ENCODE measurements at regions of chr1 and their contacts with region 1.

Region 1: DNA sequence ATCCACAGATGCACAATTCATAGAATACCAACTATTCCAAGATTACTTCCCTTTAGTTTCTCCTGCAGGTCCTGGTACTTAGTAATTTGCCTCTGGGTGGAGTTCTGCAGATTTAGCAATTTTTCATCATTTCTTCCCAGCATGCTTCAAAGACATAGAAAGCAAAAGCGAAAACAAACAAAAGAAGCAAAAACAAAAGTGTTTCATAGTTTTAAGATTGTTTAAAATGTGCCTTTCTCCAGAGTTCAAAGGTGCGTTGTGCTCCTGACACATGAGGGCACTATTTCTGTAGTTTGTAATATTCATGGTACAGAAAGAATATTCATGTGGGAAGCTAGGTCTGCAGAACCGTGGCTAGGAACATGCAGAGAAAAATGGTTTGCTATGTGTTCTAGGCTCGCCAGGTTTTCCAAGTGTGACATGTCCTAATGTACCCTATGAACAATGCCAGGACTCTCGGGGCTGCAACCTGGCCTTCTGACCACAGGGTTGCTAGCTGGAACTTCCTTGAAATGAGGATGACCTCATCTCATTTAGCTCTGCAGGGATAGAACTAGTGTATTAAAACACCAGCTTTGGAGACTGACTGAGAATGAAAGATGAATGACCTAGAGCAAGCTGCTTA is 30.0 kb upstream of the RCSD1 start:
- DNase-seq: no peak
- ATAC-seq: peak; percentile 66
- H3K4me3 Mint-ChIP-seq: peak overlapping the region; percentile 48
- H3K27ac Mint-ChIP-seq: peak overlapping the region; percentile 7
- H3K4me1 Mint-ChIP-seq: peaks cover 43% of the 10 kb centered on the region
- H3K27me3 Mint-ChIP-seq: no peaks in the 10 kb centered on the region
- CTCF ChIP-seq: peak; percentile 56

Region 2: DNA sequence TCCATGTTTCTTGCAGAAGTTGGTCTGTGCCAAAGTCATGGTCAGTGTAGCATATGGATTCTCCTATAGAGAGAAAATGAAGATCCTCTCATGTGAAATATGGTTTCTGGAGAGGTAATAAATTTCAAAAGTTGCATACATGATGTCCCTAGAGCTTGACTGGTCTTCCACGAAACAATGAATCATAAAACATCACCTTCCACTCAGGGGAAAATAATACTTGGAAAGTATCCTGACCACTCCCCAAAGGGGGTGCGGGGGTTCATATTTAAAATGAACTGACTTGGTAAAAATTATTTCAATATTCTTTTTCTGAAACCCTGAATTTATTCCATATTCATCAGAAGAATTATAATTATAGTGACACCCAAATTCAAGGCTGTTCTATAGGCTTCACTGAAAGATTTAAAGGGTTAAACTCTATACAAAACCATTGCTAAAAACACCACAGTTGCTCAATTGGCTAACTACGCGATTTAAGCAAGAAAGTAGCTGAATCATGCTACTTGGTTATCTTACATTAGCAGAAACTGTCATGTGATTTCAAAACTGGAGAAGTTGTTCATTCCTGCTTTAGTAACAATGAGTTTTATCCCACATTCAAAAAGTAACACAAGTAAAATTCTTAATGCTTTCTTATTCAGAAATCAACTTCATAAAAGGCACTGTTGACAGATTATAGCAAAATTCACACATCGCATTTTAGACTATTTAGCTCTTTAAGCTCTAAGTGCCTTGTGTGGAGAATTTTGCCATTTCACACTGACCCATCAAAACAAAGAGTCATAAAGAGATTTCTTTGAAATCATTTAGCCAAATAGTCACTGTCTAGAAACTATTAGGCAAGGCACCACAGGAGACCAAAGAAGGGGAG is 51.8 kb before region 1 on chr1:
- CTCF ChIA-PET with region 1: no interaction called
- POLR2A ChIA-PET with region 1: no interaction called
- intact Hi-C with region 1: no loop called
- DNase-seq: no peak
- ATAC-seq: no peak
- H3K4me3 Mint-ChIP-seq: no peak overlapping the region
- H3K27ac Mint-ChIP-seq: no peak overlapping the region
- H3K4me1 Mint-ChIP-seq: peaks cover 5% of the 10 kb centered on the region
- H3K27me3 Mint-ChIP-seq: no peaks in the 10 kb centered on the region
- CTCF ChIP-seq: no peak

Region 3: DNA sequence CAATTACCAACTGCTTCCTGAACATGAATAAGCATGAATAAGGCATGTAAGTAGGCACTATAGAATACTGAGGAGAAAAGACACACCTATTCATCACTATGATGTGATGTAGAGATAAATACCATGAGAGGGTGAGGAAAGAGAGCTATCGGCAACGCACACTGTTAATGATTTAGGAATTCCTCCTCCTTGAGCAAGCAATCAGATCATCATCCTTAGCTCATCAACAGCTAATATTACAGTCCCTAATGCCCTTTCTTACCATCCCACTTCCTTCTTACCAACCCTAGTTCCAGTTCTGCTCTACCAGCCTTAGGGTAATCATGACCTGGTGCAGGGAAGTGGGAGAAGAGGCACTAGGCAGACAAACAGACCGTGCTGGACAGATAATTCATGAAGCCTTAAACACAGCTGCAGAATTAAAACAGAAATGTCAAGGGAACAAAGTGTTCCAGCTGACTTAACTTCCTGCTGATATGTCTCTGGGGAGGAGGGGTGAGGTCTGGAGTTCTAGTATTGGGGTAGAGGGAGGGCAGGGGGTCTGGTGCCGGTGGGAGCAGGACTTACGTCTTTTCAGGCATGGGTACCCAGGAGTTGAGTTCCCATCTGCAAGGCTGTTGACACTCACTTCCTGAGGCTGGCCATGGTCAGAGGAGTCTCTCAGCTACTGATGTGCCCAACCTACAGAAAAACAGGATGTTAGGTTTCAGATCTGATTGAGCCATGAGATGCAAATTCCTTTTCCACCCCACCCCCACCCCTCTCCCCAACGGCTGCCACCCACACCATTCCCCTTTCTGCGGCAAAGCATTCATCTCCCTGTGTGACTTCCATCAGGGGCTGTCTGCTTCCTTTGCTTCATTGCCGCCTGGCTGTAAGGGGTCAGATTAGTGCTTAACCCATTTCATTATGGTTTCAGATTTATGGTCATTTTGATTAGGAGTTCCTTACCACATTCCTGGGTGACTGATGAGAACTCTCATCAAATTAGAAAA is 17.4 kb after region 1 on chr1:
- CTCF ChIA-PET with region 1: interaction called, 78 read pairs
- POLR2A ChIA-PET with region 1: interaction called, 123 read pairs
- intact Hi-C with region 1: loop called (anchors 1 kb)
- DNase-seq: peak; percentile 62
- ATAC-seq: peak; percentile 89
- H3K4me3 Mint-ChIP-seq: peak overlapping the region; percentile 77
- H3K27ac Mint-ChIP-seq: peak overlapping the region; percentile 94
- H3K4me1 Mint-ChIP-seq: peaks cover 92% of the 10 kb centered on the region
- H3K27me3 Mint-ChIP-seq: no peaks in the 10 kb centered on the region
- CTCF ChIP-seq: no peak

Region 4: DNA sequence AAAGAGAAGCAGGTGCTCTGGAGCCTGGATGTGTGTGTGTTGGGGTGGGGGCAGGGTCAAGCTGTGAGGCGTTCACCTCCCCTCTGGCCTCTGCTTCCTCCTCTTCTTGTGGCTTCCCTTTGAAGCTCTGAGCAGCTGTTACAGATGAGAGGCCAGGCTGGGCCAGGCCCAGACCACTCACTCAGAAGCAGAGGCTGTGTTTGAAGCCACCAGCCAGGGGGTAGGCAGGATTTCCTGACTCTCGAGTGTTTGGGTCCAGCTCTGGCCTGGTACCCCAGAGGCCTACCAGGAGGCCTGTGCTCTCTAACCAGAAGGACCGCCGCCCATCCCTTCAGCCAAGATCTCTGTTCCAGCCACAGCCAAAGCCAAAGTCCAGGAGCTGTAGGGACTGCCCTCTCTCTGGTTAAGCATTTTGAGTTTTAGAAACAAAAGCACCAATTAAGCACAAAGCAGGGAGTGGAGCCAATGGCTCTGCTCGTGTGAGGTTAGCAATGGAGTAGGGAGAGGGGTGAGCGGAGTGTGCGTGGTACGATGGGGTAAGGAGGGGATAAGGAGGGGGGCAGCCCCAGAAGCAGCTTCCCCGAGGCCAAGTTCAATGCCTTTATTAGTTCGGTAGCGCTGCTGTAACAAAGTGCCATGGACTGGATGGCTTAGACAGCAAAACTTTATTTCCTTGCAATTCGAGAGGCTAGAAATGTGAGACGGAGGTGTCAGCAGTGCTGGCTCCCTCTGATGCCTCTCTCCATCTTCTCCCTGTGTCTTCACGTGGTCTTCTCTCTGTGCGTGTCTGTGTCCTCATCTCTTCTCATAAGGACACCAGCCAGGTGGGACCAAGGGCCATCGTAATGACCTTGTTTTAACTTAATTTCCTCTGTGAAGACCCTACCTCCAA is 50.4 kb after region 1 on chr1:
- CTCF ChIA-PET with region 1: interaction called, 38 read pairs
- POLR2A ChIA-PET with region 1: interaction called, 16 read pairs
- intact Hi-C with region 1: no loop called
- DNase-seq: no peak
- ATAC-seq: peak; percentile 68
- H3K4me3 Mint-ChIP-seq: peak overlapping the region; percentile 73
- H3K27ac Mint-ChIP-seq: peak overlapping the region; percentile 93
- H3K4me1 Mint-ChIP-seq: peaks cover 94% of the 10 kb centered on the region
- H3K27me3 Mint-ChIP-seq: no peaks in the 10 kb centered on the region
- CTCF ChIP-seq: no peak

Region 5: DNA sequence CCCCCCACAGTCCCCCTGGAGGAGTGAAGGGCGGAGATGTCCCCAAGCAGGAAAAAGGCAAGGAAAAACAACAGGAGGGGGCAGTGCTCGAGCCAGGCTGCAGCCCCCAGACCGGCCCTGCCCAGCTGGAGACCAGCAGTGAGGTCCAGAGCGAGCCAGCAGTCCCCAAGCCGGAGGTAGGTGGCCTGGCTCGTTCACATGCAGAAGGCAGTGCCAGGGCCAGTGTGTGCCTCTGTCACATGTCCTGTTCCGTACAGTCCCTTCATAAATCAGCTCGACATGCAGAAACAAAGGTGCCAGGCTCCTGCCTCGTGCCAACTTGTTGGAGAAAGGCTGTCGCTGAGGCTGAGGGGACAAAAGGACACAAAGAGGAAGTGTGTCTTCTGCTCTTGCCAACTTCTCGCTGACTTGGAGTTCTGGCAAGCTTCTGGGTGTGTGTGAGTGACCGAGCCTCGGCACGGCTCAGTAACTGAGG is 97.6 kb after region 1 on chr1:
- CTCF ChIA-PET with region 1: interaction called, 13 read pairs
- POLR2A ChIA-PET with region 1: no interaction called
- intact Hi-C with region 1: no loop called
- DNase-seq: no peak
- ATAC-seq: peak; percentile 21
- H3K4me3 Mint-ChIP-seq: no peak overlapping the region
- H3K27ac Mint-ChIP-seq: peak overlapping the region; percentile 61
- H3K4me1 Mint-ChIP-seq: peaks cover 22% of the 10 kb centered on the region
- H3K27me3 Mint-ChIP-seq: no peaks in the 10 kb centered on the region
- CTCF ChIP-seq: no peak

Region 6: GRCh38 chr1:167715157-167715999 is 115.3 kb after region 1 on chr1:
- CTCF ChIA-PET with region 1: interaction called, 25 read pairs
- POLR2A ChIA-PET with region 1: interaction called, 4 read pairs
- intact Hi-C with region 1: no loop called
- DNase-seq: peak; percentile 69
- ATAC-seq: peak; percentile 51
- H3K4me3 Mint-ChIP-seq: peak overlapping the region; percentile 85
- H3K27ac Mint-ChIP-seq: peak overlapping the region; percentile 98
- H3K4me1 Mint-ChIP-seq: peaks cover 68% of the 10 kb centered on the region
- H3K27me3 Mint-ChIP-seq: peaks cover 7% of the 10 kb centered on the region
- CTCF ChIP-seq: peak; percentile 68

Region 7: GRCh38 chr1:168082008-168082876 is 482.2 kb after region 1 on chr1:
- CTCF ChIA-PET with region 1: interaction called, 10 read pairs
- POLR2A ChIA-PET with region 1: no interaction called
- intact Hi-C with region 1: loop called (anchors 5 kb)
- DNase-seq: peak; percentile 40
- ATAC-seq: peak; percentile 92
- H3K4me3 Mint-ChIP-seq: no peak overlapping the region
- H3K27ac Mint-ChIP-seq: no peak overlapping the region
- H3K4me1 Mint-ChIP-seq: no peaks in the 10 kb centered on the region
- H3K27me3 Mint-ChIP-seq: no peaks in the 10 kb centered on the region
- CTCF ChIP-seq: no peak